ENCODE measurements at regions of chr12 and their contacts with region 1.

Region 1: GRCh38 chr12:121590476-121591143 is 9.8 kb upstream of the KDM2B start:
- DNase-seq: no peak
- H3K4me3 ChIP-seq: no peak overlapping the region
- H3K27ac ChIP-seq: no peak overlapping the region
- H3K4me1 ChIP-seq: no peaks in the 10 kb centered on the region
- H3K27me3 ChIP-seq: no peaks in the 10 kb centered on the region
- CTCF ChIP-seq: no peak

Region 2: GRCh38 chr12:121741743-121742142 is 151.1 kb after region 1 on chr12:
- CTCF ChIA-PET with region 1: no interaction called
- POLR2A ChIA-PET with region 1: interaction called, 13 read pairs
- intact Hi-C with region 1: no loop called
- DNase-seq: no peak
- H3K4me3 ChIP-seq: no peak overlapping the region
- H3K27ac ChIP-seq: no peak overlapping the region
- H3K4me1 ChIP-seq: no peaks in the 10 kb centered on the region
- H3K27me3 ChIP-seq: no peaks in the 10 kb centered on the region
- CTCF ChIP-seq: no peak

Measured in PC-9 (cell line).